Common myeloid progenitor, CD34-positive (primary cell): ENCODE measurements at regions of chr1 and their contacts with region 1.

Region 1: GRCh38 chr1:32215629-32216480 is 6.3 kb downstream of the TMEM234 start:
- DNase-seq: peak; percentile 57 to 75 (median 62)
- H3K4me3 ChIP-seq: no peak overlapping the region
- H3K27ac ChIP-seq: no peak overlapping the region
- H3K4me1 ChIP-seq: peaks cover 0 to 2% (median under 1%) of the 10 kb centered on the region in 4 experiments
- H3K27me3 ChIP-seq: no peaks in the 10 kb centered on the region

Region 2: GRCh38 chr1:32200226-32201010 is 15.4 kb before region 1 on chr1 and contains the start of gene CCDC28B:
- CTCF ChIA-PET with region 1: interaction called, 48 read pairs
- POLR2A ChIA-PET with region 1: interaction called, 3 read pairs
- DNase-seq: peak in 2 of 3 donors; percentile 55 to 66
- H3K4me3 ChIP-seq: peak within 1 kb of the TSS; percentile 44 to 80 (median 67)
- H3K27ac ChIP-seq: peak within 1 kb of the TSS; percentile 51 to 67
- H3K4me1 ChIP-seq: peaks cover 3 to 47% (median 41%) of the 10 kb centered on the region in 4 experiments
- H3K27me3 ChIP-seq: no peaks in the 10 kb centered on the region

Region 3: DNA sequence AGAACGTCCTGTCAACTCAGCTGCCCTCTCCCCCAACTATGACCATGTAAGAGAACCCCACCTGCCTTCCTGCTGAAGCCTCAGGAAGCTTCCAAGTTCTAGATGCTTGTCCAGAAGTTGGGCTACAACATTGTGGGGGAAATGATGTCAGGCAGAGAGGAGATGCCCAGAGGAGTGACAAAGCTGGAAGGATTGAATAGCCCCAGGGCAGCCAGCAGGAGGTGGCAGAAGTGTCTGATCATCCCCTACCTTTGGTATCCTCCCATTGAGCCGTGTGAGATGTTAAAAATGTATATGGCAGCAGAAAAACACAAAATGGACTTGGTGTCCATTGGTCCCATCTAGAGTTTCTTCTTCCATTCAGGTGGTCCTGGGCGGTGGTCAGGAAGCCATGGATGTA is 12.9 kb after region 1 on chr1:
- CTCF ChIA-PET with region 1: interaction called, 12 read pairs
- POLR2A ChIA-PET with region 1: no interaction called
- DNase-seq: no peak
- H3K4me3 ChIP-seq: no peak overlapping the region
- H3K27ac ChIP-seq: no peak overlapping the region
- H3K4me1 ChIP-seq: peaks cover 0 to 4% (median under 1%) of the 10 kb centered on the region in 4 experiments
- H3K27me3 ChIP-seq: no peaks in the 10 kb centered on the region

Region 4: GRCh38 chr1:32247983-32248889 is 32.4 kb after region 1 on chr1:
- CTCF ChIA-PET with region 1: interaction called, 50 read pairs
- POLR2A ChIA-PET with region 1: no interaction called
- DNase-seq: peak; percentile 58 to 67 (median 64)
- H3K4me3 ChIP-seq: peak overlapping the region in 3 of 7 experiments; percentile 50 to 54 (median 50)
- H3K27ac ChIP-seq: no peak overlapping the region
- H3K4me1 ChIP-seq: peaks cover 11 to 64% (median 59%) of the 10 kb centered on the region in 4 experiments
- H3K27me3 ChIP-seq: no peaks in the 10 kb centered on the region

Region 5: GRCh38 chr1:32266921-32267591 is 51.2 kb after region 1 on chr1:
- CTCF ChIA-PET with region 1: no interaction called
- POLR2A ChIA-PET with region 1: no interaction called
- DNase-seq: peak in 2 of 3 donors; percentile 8 to 20
- H3K4me3 ChIP-seq: no peak overlapping the region
- H3K27ac ChIP-seq: no peak overlapping the region
- H3K4me1 ChIP-seq: peaks cover 0 to 4% (median 0%) of the 10 kb centered on the region in 4 experiments
- H3K27me3 ChIP-seq: no peaks in the 10 kb centered on the region

Region 6: DNA sequence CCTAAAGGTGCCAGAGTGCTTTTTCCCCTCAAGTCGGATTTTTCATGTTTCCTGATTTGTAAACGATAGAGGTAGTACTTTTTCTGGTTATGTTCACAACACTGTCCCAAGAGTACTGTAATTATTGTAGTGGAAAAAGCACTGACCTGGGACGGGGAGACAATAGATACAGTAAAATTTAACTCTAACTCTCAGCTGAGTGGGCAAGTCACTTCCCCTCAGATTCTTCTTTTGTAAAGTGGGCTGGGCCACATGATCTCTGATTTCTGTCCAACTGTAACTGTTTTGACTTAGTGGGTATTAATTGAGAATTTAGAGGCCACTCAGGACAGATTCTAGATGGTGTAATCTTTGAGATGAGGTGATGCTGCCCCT is 101.0 kb after region 1 on chr1:
- CTCF ChIA-PET with region 1: interaction called, 12 read pairs
- POLR2A ChIA-PET with region 1: interaction called, 3 read pairs
- DNase-seq: no peak
- H3K4me3 ChIP-seq: no peak overlapping the region
- H3K27ac ChIP-seq: no peak overlapping the region
- H3K4me1 ChIP-seq: peaks cover 0 to 3% (median 0%) of the 10 kb centered on the region in 4 experiments
- H3K27me3 ChIP-seq: no peaks in the 10 kb centered on the region

Region 7: GRCh38 chr1:32345289-32345827 is 129.5 kb after region 1 on chr1:
- CTCF ChIA-PET with region 1: no interaction called
- POLR2A ChIA-PET with region 1: no interaction called
- DNase-seq: peak; percentile 48 to 76 (median 75)
- H3K4me3 ChIP-seq: no peak overlapping the region
- H3K27ac ChIP-seq: no peak overlapping the region
- H3K4me1 ChIP-seq: peaks cover 7 to 37% (median 31%) of the 10 kb centered on the region in 4 experiments
- H3K27me3 ChIP-seq: peaks cover 0 to 5% (median 0%) of the 10 kb centered on the region in 5 experiments